Activated T-helper 1 cell treated with anti-CD3 and anti-CD28 coated beads, Interleukin-12 subunit alpha, Interleukin-12 subunit beta, Interleukin-2, Interleukin-4 antibody, amounts not matched to agents 30 ng/mL and 10 ng/mL and 1 ng/mL, durations not matched to agents 14 hours and 24 hours and 36 hours (primary cell): ENCODE measurements at regions of chr17 and their contacts with region 1.

Region 1: DNA sequence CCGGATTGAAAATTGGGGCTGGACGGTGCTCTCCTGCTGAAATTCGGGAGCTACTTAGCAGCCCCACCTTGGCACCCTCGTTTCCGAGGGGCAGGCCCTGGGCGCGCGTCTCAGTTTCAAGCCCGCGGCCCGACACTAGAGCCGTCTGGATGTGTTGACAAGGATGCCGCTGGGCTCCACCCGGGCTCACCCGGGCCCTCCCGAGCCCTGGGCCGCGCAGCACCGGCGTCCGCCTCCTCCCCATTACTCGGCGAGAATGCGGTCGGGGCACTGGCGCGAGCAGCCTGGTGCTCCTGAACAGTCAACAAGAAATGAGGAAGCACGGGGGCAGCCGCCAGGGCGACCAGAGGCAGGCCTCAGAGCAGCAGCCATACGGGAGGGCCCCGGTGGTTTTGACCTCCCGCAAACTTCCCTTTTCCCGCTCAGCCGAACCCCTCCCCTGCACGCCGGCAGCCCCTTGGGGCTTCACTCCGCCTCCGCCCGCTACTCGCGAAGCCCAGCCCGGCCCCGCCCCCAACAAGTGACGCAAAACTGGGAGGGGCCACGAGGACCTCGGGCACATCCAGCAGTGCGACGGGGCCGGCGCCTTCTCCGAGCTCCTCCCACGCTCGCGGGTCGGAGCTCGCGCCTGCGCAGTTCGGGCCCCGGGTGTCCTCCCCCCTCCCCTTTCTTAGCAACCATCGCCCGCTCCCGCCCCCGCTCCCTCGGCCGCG is 447 bp upstream of the SEC14L1 start:
- DNase-seq: peak; percentile 99
- H3K4me3 Mint-ChIP-seq: peak overlapping the region; percentile 74
- H3K27ac Mint-ChIP-seq: peak overlapping the region; percentile 96
- H3K4me1 Mint-ChIP-seq: peaks cover 64% of the 10 kb centered on the region
- H3K27me3 Mint-ChIP-seq: peaks cover 2% of the 10 kb centered on the region

Region 2: GRCh38 chr17:77088455-77089123 is 51.7 kb before region 1 on chr17:
- intact Hi-C with region 1: loop called (anchors 1 kb)
- DNase-seq: peak; percentile 84
- H3K4me3 Mint-ChIP-seq: peak overlapping the region; percentile 91
- H3K27ac Mint-ChIP-seq: peak overlapping the region; percentile 94
- H3K4me1 Mint-ChIP-seq: peaks cover 39% of the 10 kb centered on the region
- H3K27me3 Mint-ChIP-seq: peaks cover 3% of the 10 kb centered on the region

Region 3: DNA sequence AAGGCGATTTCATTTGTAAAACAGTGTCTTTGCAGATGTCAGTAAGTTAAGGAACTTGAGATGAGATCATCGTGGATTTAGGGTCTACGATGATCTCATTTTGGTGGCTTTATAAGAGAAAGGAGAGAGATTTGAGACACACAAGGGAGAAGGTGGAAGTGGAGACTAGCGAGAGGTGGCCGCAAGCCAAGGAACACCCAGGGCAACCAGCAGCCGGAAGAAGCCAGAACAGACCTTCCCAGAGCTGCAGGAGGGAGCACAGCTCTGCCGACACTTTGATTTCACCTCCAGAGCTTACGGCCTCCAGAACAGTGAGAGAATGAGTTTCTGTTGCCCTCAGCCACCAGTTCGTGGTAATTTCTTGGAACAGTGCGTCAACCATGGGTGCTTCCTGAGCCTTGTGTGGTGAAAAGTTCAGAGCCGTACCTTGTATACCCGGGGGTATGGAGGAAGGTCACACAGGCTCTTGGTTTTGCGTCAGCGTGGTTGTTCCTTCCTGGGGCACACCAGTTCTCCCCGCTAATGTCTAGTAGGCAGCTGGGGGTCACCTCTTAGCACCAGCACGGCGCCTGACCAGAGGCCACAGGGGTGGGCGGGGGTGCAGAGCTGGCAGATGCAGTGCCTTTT is 12.5 kb before region 1 on chr17:
- intact Hi-C with region 1: loop called (anchors 1 kb)
- DNase-seq: peak; percentile 75
- H3K4me3 Mint-ChIP-seq: peak overlapping the region; percentile 76
- H3K27ac Mint-ChIP-seq: peak overlapping the region; percentile 97
- H3K4me1 Mint-ChIP-seq: peaks cover 48% of the 10 kb centered on the region
- H3K27me3 Mint-ChIP-seq: no peaks in the 10 kb centered on the region

Region 4: DNA sequence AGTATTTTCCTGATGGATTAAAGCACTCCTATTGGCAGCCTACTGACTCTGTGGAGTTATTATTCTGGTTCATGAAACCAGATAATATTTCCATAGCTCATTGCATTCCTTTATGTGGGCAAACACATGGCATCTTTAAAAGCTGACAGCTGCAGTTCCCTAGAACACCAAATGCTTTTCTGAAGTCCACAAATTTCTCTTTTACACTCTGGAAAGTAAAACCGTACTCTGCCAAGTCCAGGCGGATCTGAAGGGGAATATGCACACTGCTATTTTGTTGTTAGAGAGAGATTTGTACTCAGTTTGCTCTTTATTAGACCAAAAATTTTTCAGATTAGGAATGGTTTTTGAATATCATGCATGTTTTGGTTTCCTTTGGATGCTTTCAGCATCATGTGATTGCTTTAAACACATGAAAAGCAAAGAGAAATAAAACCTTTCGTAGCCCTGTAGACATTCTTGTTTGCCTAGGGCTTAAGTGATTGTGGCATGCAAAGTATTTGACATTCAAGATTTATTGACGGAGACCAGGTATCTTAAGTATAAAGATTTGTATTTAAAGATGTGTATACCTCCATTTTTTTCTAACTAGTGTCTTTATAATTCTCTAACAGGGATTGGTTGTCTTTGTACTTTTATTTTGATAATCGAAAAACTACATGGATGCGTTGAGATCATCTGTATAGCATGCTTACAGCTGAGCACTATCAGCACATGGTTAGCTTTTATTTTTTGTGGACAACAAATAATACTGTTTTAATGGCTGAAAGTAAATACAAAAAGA is 20.0 kb after region 1 on chr17:
- intact Hi-C with region 1: no loop called
- DNase-seq: no peak
- H3K4me3 Mint-ChIP-seq: no peak overlapping the region
- H3K27ac Mint-ChIP-seq: no peak overlapping the region
- H3K4me1 Mint-ChIP-seq: peaks cover 60% of the 10 kb centered on the region
- H3K27me3 Mint-ChIP-seq: no peaks in the 10 kb centered on the region

Region 5: DNA sequence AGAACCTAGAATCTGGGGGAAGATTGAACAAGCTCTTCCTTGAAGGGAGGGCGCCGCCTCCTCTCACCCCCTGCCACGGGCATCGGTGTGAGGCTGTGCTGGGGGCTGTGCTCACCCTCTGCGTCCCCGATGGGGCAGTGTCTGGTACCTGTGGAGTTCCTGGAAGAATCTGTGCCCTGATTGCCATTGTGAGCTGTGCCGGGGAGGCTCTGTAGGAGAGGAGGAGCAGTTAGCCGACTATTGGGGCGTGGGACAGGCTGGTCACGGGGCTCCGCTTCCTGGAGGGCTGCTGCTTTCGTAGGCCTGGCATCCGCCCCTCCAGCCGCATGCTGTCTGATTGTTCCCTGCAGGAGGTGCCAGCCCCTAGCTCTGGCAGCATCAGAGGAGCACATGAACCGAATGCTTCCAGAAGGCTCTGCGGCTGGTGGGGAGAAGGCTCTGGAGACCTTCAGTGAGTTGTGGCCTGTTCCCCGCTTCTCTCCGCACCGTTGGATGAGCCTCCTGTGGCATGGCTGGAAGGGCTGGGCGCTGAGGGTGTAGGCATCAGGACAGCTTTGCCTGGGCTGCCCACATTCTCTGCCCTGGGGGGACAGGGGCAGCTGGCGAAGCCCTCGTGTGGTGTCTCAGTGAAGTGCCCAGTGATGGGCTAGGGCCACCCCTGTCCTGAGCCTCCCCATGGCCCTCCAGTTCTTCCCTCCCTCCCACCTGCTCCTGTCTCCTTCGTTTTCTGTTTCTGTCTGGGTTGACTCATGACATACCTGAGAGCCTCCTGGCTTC is 87.3 kb after region 1 on chr17:
- intact Hi-C with region 1: no loop called
- DNase-seq: no peak
- H3K4me3 Mint-ChIP-seq: no peak overlapping the region
- H3K27ac Mint-ChIP-seq: no peak overlapping the region
- H3K4me1 Mint-ChIP-seq: no peaks in the 10 kb centered on the region
- H3K27me3 Mint-ChIP-seq: no peaks in the 10 kb centered on the region

Region 6: DNA sequence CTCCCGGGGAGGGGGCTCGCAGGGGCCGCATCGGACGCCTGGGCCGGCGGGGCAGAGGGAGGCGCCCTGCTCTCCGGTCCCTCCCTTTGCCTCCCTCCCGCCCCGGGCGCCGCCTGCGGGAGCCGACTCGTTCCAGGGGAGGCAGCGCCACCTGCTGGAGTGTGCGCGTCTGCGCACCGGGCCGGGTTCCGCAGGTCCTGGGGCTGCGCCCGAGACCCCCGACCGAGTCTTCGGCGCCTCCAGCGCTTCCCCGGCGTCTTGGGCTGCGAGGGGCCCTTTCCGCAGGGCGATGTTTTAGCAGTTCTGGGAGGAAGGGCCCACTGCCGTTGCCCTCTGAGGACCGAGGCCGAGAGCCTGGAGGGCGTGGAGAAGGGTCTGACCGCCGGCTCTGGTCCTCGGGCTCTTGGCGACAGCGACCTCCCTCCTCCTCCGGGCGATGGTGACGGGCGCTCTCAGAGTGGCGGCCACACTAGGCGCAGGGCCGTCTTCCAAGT is 106.8 kb after region 1 on chr17:
- intact Hi-C with region 1: loop called (anchors 1 kb)
- DNase-seq: peak; percentile 81
- H3K4me3 Mint-ChIP-seq: peak overlapping the region; percentile 58
- H3K27ac Mint-ChIP-seq: no peak overlapping the region
- H3K4me1 Mint-ChIP-seq: peaks cover 24% of the 10 kb centered on the region
- H3K27me3 Mint-ChIP-seq: peaks cover 28% of the 10 kb centered on the region

Region 7: DNA sequence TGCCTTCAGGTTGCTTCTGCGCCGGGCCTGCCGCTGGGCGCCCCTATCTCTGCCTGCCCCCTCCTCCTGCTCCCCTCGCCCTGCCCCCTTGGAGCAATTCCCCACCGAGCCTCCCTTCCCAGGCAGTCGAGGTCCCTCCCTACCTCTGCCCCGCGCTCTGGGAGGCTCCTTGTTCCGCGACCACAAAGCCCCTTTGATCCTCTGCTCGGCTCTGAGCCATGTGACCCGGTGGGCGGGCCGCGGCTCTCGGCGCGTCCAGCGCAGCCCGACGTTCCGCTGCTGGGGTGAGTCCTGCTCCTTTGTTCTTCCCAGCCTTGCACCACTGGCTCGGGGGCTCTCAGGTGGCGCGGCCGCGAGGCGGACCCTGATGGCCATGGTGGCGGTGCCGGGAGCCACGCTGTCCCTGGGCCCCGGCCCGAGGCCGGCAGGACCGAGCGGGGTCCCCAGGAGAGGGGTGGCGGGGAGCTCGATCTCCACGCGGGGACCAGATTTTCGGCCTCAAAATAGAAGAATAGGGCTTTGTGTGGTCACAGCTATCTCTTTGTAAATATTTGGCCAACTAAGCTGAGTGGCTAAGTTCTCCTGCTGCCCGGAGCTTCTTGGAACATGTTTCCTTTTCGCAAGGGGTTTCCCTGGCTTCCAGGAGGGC is 311.0 kb after region 1 on chr17:
- intact Hi-C with region 1: loop called (anchors 10 kb)
- DNase-seq: peak; percentile 68
- H3K4me3 Mint-ChIP-seq: peak overlapping the region; percentile 95
- H3K27ac Mint-ChIP-seq: peak overlapping the region; percentile 92
- H3K4me1 Mint-ChIP-seq: peaks cover 66% of the 10 kb centered on the region
- H3K27me3 Mint-ChIP-seq: no peaks in the 10 kb centered on the region

Region 8: GRCh38 chr17:77657839-77658238 is 517.5 kb after region 1 on chr17:
- intact Hi-C with region 1: no loop called
- DNase-seq: no peak
- H3K4me3 Mint-ChIP-seq: no peak overlapping the region
- H3K27ac Mint-ChIP-seq: no peak overlapping the region
- H3K4me1 Mint-ChIP-seq: no peaks in the 10 kb centered on the region
- H3K27me3 Mint-ChIP-seq: peaks cover 22% of the 10 kb centered on the region